CD4-positive, alpha-beta memory T cell (primary cell): ENCODE measurements at regions of chr17 and their contacts with region 1.

Region 1: GRCh38 chr17:7931709-7932482 is at the starts of genes CNTROB and TRAPPC1:
- DNase-seq: peak; percentile 99 to 100 (median 99)
- H3K4me3 ChIP-seq: peak within 1 kb of the TSS; percentile 84 to 100
- H3K4me3 Mint-ChIP-seq: peak within 1 kb of the TSS; percentile 94 to 100 (median 98)
- H3K27ac ChIP-seq: peak within 1 kb of the TSS; percentile 85
- H3K27ac Mint-ChIP-seq: peak within 1 kb of the TSS; percentile 88 to 100 (median 98)
- H3K4me1 ChIP-seq: peaks cover 33% of the 10 kb centered on the region
- H3K4me1 Mint-ChIP-seq: peaks cover 34 to 58% (median 44%) of the 10 kb centered on the region in 4 donors
- H3K27me3 ChIP-seq: no peaks in the 10 kb centered on the region
- H3K27me3 Mint-ChIP-seq: no peaks in the 10 kb centered on the region
- total RNA-seq, gene CNTROB: 29.7 to 30.1 TPM
- total RNA-seq, gene TRAPPC1: 116 TPM

Region 2: DNA sequence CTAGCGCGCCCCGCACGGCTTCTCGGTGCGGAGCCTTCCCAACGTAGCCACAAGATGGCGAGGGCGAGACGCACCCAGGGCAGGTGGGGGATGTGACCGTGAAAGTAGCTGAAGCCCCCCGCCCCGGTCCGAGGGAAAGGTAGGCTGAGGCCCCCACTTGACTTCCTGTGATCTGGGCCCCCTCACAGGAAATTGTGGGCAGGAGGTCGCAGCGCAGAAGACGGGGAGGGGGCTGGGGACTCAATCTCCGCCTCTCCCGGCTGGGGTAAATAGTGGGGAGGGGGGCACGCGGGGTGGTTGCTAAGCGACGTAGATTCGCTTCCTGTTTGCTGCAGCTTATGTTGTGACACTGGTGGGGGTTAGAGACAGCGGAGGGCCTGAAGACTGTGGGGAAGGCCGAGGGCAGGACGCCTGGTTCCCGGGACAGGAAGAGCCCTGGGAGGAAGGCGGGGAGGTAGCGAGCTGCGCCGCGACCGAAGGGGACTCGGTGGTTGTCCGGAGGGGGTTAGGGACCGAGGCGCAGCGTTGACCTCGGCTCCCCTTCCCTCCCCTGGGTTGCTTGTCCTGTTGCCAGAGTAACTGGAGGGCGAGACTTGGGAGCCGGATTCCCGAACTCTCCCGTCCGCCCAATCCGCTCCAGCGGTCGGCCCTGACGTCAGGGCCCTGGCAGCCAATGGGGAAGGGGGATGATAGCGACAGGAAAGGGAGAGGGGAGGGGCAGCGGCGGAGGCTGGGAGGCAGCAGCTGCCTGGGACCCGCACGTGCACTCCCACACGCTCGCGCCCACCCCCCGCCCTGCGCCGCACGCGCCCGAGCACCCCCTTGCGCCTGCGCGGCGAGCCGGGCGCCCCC is 96.7 kb before region 1 on chr17:
- CTCF ChIA-PET with region 1: interaction called, 4 read pairs
- POLR2A ChIA-PET with region 1: interaction called, 19 read pairs
- intact Hi-C with region 1: loop called (anchors 2 kb)
- DNase-seq: peak; percentile 90 to 98 (median 92)
- H3K4me3 ChIP-seq: peak overlapping the region; percentile 76 to 84
- H3K4me3 Mint-ChIP-seq: peak overlapping the region; percentile 90 to 98 (median 94)
- H3K27ac ChIP-seq: peak overlapping the region; percentile 98
- H3K27ac Mint-ChIP-seq: peak overlapping the region; percentile 99 to 100 (median 99)
- H3K4me1 ChIP-seq: peaks cover 45% of the 10 kb centered on the region
- H3K4me1 Mint-ChIP-seq: peaks cover 36 to 64% (median 42%) of the 10 kb centered on the region in 4 donors
- H3K27me3 ChIP-seq: no peaks in the 10 kb centered on the region
- H3K27me3 Mint-ChIP-seq: peaks cover 0 to 9% of the 10 kb centered on the region in 2 donors

Region 3: DNA sequence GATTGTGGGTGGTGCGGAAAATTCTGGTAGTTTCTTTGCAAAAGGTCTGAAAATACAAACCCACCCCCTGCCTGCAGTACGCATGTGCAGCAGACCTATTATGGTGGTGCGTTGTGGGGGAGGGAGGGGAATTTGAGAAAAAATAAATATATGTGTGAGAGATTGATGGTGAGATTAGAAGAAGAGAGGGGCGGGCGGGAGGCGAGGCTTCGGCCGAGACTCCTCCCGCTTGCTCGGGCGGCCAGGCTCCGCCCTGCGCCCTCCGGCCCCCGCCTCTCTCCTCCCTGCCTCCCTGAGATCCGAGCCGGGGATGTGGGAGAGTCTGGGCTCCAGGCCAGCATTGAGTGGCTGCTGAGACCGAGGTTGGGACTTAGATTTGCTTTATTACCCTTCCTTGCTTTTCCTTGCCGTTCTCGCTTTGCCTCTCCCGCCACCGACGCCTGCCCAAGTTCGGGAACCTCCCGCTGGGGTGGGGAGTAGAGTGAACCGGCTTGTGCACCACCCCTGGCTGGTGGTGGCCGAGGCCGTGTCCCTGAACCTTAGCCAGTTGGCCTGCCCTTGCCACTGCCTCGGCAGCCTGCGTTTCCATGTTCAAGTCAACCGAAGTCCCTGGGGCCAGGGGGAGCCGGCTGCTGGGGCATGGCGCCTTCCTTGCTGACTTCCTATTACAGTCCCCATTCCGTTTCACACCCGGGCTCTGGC is 44.3 kb before region 1 on chr17:
- CTCF ChIA-PET with region 1: no interaction called
- POLR2A ChIA-PET with region 1: interaction called, 10 read pairs
- intact Hi-C with region 1: loop called (anchors 1 kb)
- DNase-seq: peak; percentile 89 to 95 (median 92)
- H3K4me3 ChIP-seq: peak overlapping the region; percentile 86 to 96
- H3K4me3 Mint-ChIP-seq: no peak overlapping the region
- H3K27ac ChIP-seq: peak overlapping the region; percentile 65
- H3K27ac Mint-ChIP-seq: no peak overlapping the region
- H3K4me1 ChIP-seq: peaks cover 46% of the 10 kb centered on the region
- H3K4me1 Mint-ChIP-seq: peaks cover 10 to 16% (median 12%) of the 10 kb centered on the region in 4 donors
- H3K27me3 ChIP-seq: no peaks in the 10 kb centered on the region
- H3K27me3 Mint-ChIP-seq: no peaks in the 10 kb centered on the region

Region 4: GRCh38 chr17:7944326-7944725 is 12.4 kb after region 1 on chr17:
- CTCF ChIA-PET with region 1: interaction called, 16 read pairs
- POLR2A ChIA-PET with region 1: interaction called, 19 read pairs
- intact Hi-C with region 1: no loop called
- DNase-seq: no peak
- H3K4me3 ChIP-seq: no peak overlapping the region
- H3K4me3 Mint-ChIP-seq: no peak overlapping the region
- H3K27ac ChIP-seq: no peak overlapping the region
- H3K27ac Mint-ChIP-seq: peak overlapping the region in 1 of 7 donors; percentile 74
- H3K4me1 ChIP-seq: no peaks in the 10 kb centered on the region
- H3K4me1 Mint-ChIP-seq: no peaks in the 10 kb centered on the region
- H3K27me3 ChIP-seq: no peaks in the 10 kb centered on the region
- H3K27me3 Mint-ChIP-seq: no peaks in the 10 kb centered on the region

Region 5: GRCh38 chr17:8288336-8289102 is 356.6 kb after region 1 on chr17 and contains the start of gene RANGRF:
- CTCF ChIA-PET with region 1: no interaction called
- POLR2A ChIA-PET with region 1: no interaction called
- intact Hi-C with region 1: loop called (anchors 5 kb)
- DNase-seq: peak; percentile 70 to 83 (median 73)
- H3K4me3 ChIP-seq: peak within 1 kb of the TSS; percentile 88 to 98
- H3K4me3 Mint-ChIP-seq: peak within 1 kb of the TSS; percentile 93 to 98 (median 97)
- H3K27ac ChIP-seq: peak within 1 kb of the TSS; percentile 83
- H3K27ac Mint-ChIP-seq: peak within 1 kb of the TSS; percentile 94 to 98 (median 97)
- H3K4me1 ChIP-seq: peaks cover 49% of the 10 kb centered on the region
- H3K4me1 Mint-ChIP-seq: peaks cover 23 to 69% (median 44%) of the 10 kb centered on the region in 4 donors
- H3K27me3 ChIP-seq: no peaks in the 10 kb centered on the region
- H3K27me3 Mint-ChIP-seq: no peaks in the 10 kb centered on the region
- total RNA-seq, gene RANGRF: 39.7 to 42.8 TPM